ENCODE measurements at regions of chr5 and their contacts with region 1.

Region 1: GRCh38 chr5:14644623-14645237 is 19.8 kb upstream of the OTULIN start:
- DNase-seq: no peak
- ATAC-seq: no peak

Region 2: DNA sequence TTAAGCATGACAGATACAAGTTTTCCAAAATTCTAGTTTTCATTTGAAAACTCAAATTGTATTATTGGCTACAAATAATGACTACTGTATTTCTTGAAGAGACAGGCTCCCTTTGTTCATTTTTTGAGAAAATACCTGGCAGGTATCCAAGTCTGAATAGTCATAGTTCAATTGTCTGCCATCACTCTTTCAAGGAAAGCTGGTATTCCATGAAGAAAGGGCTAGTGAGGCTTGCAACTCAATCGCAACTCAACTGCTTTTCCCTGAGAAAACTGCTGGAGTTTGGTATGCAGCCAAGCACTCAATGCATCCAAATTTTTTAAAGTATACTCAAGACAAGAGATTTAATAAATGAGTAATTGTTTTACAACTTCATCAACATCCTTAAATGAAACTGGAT is 562.9 kb before region 1 on chr5:
- intact Hi-C with region 1: no loop called
- DNase-seq: no peak
- ATAC-seq: no peak

Region 3: DNA sequence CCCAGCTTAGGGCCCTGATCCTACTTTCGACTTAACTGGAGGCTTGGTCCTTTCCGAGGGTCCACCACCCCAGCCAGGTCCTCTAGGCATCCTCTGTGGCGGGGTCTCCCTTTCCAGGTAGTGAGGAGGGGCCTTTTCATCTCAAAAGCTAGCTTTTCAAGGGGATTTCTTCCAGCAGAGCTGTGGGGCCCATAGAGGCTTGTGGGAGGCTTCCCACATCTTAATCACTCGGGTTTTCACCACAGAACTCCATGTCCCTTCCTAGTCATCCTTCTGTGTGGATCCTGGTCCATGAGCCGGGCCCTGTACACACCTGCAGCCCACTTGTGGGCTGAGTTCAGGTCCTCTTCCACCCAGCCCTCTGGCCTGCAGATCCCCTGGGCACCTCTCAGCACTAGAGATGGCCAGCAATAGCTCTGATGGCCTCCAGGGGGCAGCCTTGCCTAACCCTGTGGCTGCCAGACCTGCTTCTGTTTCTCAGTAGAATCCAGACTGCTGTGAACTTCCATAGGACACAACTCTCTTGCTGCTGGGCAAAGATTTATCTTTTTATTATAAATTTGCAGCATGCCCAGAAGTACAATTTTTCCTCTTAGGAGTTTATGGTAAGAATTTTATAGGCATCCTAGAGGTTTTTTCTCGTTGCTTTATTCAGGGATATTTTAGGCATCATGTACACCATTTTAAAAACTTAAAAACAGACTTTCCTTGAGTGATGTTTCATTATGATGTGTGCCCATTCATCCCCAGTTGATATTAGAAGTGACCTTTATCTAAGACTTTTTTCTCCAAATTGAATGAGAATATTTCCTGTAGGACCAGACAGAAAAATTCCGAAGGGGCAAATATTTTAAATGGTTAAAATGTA is 292.7 kb before region 1 on chr5:
- intact Hi-C with region 1: loop called (anchors 5 kb)
- DNase-seq: peak; percentile 82
- ATAC-seq: peak; percentile 85

Region 4: DNA sequence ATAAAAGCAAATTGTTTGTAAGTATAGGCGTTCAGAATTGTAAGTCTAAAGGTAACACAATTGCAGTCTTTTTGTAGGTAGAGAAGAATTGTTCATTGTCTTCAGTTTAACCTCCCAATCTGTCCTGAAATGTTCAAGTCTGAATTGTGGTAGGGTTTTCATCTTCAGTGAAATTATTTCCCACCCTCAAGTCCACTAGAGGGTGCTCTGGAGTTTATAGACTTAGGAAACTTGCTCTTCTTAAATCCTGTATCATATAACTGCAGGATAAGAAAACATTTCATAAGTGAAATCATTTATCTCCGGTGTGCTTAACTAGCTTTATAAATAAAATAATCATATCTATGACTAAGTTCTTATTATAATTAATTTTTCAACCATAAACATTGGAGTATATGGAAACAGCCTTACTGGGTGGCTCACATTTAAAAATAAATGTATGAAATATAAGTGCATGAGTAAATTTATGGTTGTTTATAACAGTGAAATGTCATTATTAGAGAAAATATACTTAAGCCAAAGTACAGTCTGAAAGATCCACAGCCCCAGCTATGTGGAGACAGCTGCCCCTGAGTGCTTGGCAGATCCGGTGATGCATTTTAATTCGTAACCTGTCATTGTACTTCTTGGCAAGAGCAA is 245.6 kb before region 1 on chr5:
- intact Hi-C with region 1: loop called (anchors 5 kb)
- DNase-seq: no peak
- ATAC-seq: peak; percentile 32

Region 5: DNA sequence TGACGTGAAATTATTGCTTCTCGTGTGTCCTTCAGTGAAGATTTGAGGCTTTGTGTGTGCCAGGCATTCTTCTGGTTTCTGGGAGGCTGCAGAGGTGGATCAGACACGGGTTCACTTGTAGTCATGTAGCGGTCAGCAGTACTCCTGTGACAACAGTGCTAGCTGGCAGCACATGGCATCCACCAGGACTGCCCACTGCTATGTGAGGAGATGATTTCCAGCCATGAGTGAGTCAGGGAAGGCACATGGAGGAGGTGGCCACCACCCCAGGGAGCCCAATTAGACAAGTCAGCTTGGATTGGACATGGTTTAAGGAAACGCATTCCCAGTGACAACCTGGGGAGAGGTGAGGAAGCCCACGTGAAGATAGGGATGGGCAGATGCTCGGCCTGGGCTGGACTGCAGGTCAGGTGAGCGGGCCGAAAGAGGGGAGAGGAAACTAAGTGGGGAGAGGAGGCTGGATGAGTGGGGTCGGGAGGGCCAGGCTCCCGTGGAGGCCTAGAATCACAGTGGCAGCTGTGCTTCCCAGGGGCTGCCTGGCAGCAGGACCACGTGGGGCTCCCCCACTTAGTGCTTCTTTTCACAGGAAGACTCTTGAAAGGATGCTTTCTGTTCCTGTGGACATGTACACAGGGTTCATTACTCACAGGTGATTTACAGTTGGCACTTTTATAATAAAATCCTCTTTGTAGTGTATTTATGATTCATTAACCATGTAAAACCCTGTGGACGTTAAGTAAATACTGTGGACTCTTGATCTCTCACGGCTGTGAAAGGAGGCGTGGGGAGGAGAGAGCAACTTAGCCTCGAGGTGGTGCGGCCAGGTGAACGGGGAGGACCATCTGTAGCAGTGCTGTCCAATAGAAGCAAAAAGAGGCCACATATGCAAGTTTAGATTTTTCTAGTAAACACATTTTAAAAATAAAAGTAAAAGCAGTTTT is 143.1 kb before region 1 on chr5:
- intact Hi-C with region 1: loop called (anchors 5 kb)
- DNase-seq: no peak
- ATAC-seq: no peak

Measured in Right ventricle myocardium inferior (tissue), 1 donor.